ENCODE measurements at regions of chr14 and their contacts with region 1.

Region 1: GRCh38 chr14:60331201-60332045 is 82.4 kb downstream of the PPM1A start:
- DNase-seq: peak; percentile 71
- CTCF ChIP-seq: peak; percentile 82

Region 2: GRCh38 chr14:60079724-60080123 is 251.7 kb before region 1 on chr14:
- CTCF ChIA-PET with region 1: no interaction called
- POLR2A ChIA-PET with region 1: no interaction called
- DNase-seq: no peak
- CTCF ChIP-seq: no peak

Region 3: DNA sequence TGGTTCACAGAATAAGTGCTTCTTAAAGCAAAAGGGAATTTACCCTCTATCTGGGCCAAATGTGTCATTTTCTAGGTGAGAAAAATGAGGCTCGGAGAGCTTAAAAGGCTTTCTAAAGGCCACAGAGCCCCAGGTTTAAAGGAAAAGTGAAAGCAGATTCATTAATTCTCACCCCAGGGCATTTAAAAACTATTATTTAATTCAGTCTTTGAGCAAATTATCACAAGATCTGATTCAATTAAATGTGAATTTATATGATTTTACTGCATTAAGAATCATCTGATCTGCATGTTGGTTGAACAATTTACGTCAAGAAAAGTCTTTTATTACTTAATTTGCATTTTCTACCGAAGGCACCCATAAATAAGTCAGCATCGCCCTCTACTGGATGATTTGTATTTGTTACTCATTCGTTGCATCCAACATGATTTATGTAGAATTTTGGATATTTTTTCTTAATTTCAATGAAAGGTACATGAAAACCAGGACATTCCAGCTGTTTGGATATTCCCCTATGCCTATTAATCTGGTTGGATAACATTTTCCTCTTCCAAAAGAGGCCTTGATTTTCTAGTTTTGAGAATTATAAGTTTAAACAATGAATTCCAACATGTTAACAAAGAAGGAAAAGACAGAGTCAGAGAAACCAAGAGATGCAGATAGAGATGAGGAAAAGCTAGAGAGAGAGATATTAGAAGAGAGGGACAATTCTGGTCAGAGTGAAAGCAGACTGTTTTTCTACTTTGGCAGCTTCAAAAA is 147.1 kb before region 1 on chr14:
- CTCF ChIA-PET with region 1: interaction called, 17 read pairs
- POLR2A ChIA-PET with region 1: no interaction called
- DNase-seq: peak; percentile 22
- CTCF ChIP-seq: peak; percentile 51

Region 4: GRCh38 chr14:60204104-60204842 is 127.2 kb before region 1 on chr14:
- CTCF ChIA-PET with region 1: interaction called, 12 read pairs
- POLR2A ChIA-PET with region 1: no interaction called
- DNase-seq: no peak
- CTCF ChIP-seq: no peak

Region 5: DNA sequence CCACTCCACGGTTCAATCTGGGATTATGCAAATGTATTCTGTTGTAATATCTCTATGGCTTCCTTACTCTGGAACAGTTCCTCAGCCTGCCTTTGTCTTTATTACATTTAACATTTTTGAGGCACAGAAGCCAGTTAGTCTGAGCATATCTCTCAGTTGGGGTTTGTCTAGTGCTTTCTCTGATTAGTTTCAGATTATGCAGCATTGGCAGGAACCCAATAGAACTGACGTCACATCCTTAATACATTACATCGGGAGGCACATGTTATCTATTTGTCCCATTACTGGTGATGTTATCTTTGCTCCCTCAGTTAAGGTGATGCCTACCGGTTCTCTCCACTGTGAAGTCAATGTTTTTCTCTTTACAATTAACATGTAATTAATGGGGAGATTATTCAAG is 20.0 kb before region 1 on chr14:
- CTCF ChIA-PET with region 1: interaction called, 24 read pairs
- POLR2A ChIA-PET with region 1: no interaction called
- DNase-seq: no peak
- CTCF ChIP-seq: no peak

Region 6: DNA sequence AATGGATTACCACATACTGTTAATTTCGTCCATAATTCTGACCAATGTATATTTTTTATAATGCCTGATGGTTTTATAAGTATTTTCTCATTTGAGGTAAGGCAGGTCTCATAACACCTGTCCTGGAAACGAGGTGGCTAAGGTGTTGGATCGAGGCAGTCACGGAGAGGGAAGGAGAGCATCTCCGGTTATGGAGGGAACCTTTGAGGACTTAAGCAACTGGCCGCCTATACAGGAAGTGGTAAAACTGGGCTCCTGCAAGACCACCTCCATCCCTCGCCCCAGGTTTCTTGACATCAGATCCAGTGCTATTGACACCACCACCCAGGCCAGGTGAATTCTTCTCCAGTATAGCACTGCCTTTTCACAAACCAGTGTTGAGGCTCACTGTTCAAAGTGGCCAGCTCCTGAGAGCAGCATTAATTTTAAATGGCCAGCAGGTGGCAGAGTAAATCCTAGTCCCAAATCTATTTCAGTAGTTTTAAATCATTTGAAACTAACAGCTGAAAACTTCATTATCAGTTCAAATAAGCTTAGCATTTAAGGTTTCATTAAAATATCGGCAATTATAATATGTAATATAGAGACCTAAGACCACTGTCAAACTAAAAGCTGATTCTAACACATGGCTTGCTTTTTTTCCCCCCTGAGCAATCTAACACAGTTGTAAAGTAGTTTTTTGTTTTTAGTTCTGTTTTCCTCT is 18.4 kb after region 1 on chr14:
- CTCF ChIA-PET with region 1: interaction called, 38 read pairs
- POLR2A ChIA-PET with region 1: no interaction called
- DNase-seq: peak; percentile 54
- CTCF ChIP-seq: peak; percentile 65

Region 7: DNA sequence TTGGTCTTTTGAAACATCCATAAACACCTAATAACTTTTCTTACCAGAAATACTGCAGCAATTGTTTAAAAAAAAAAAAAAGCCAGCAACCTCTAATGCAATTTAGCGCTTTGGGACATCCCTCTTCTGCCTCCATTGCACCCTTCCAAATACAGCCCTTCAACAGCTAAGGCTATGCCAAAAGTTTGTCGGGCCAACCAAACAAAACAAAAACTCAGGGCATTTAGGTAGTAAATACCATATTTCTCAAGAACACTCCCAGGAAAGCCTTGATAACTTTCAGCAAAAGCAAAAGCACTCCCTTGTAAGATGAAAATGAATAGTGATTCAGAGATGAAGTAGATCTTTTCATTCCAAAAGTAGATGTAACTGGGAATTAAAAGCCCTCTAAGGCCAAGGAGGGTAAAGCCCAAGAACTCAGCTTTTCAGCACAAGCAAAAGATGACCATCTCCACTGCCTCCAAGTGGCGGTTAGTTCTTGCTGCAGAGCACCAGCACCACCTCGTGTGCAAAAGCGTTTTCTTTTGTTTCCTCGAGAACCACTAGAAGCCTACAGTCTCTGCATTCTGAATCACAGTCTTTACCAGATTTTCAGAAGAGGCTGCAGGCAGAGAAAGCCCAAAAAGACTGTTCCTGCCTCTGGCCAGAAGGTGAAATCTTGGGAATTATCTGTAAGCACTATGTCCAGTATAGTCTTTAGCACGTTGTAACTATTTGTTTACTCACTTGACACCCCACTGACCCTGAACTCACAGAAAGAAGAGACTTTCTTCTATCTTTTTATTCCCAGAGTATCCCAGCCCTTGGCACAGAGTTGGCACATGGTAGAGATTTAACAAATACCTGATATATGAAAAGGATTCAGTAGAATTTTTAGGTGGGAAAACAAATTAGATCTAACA is 230.7 kb after region 1 on chr14:
- CTCF ChIA-PET with region 1: interaction called, 24 read pairs
- POLR2A ChIA-PET with region 1: no interaction called
- DNase-seq: peak; percentile 41
- CTCF ChIP-seq: peak; percentile 85

Region 8: GRCh38 chr14:60686865-60687264 is 355.4 kb after region 1 on chr14:
- CTCF ChIA-PET with region 1: no interaction called
- POLR2A ChIA-PET with region 1: no interaction called
- DNase-seq: no peak
- CTCF ChIP-seq: no peak